Calu3 (cell line): ENCODE measurements at regions of chrX and their contacts with region 1.

Region 1: GRCh38 chrX:118807151-118808017 is 16.2 kb upstream of the ZCCHC12 start:
- DNase-seq: peak; percentile 51
- H3K4me3 Mint-ChIP-seq: no peak overlapping the region
- H3K27ac Mint-ChIP-seq: no peak overlapping the region
- H3K4me1 Mint-ChIP-seq: no peaks in the 10 kb centered on the region
- H3K27me3 Mint-ChIP-seq: no peaks in the 10 kb centered on the region
- CTCF ChIP-seq: peak; percentile 56

Region 2: GRCh38 chrX:118459494-118459893 is 347.9 kb before region 1 on chrX:
- CTCF ChIA-PET with region 1: no interaction called
- intact Hi-C with region 1: loop called (anchors 10 kb)
- DNase-seq: peak; percentile 32
- H3K4me3 Mint-ChIP-seq: no peak overlapping the region
- H3K27ac Mint-ChIP-seq: no peak overlapping the region
- H3K4me1 Mint-ChIP-seq: no peaks in the 10 kb centered on the region
- H3K27me3 Mint-ChIP-seq: no peaks in the 10 kb centered on the region
- CTCF ChIP-seq: peak; percentile 30

Region 3: DNA sequence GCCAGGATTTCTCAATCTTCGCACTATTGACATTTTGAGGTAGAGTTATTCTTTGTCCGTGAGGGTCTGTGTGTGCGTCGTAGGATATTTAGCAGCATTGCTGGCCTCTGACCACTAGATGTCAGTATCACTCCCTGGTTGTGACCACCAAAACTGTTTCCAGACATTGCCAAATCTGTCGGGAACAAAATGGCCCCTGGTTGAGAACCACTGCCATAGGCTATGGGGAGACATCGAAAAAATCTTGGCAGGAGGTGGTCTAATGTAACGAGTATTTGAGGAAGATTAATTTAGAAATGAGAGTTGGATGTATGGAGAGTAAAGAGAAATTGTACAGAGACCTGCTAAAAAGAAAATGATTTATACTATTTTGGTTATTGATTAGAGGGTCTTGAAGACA is 203.4 kb before region 1 on chrX:
- CTCF ChIA-PET with region 1: no interaction called
- intact Hi-C with region 1: loop called (anchors 1 kb)
- DNase-seq: peak; percentile 50
- H3K4me3 Mint-ChIP-seq: peak overlapping the region; percentile 28
- H3K27ac Mint-ChIP-seq: peak overlapping the region; percentile 27
- H3K4me1 Mint-ChIP-seq: peaks cover 8% of the 10 kb centered on the region
- H3K27me3 Mint-ChIP-seq: no peaks in the 10 kb centered on the region
- CTCF ChIP-seq: peak; percentile 37

Region 4: GRCh38 chrX:118637997-118638396 is 169.4 kb before region 1 on chrX:
- CTCF ChIA-PET with region 1: no interaction called
- intact Hi-C with region 1: loop called (anchors 1 kb)
- DNase-seq: no peak
- H3K4me3 Mint-ChIP-seq: no peak overlapping the region
- H3K27ac Mint-ChIP-seq: no peak overlapping the region
- H3K4me1 Mint-ChIP-seq: no peaks in the 10 kb centered on the region
- H3K27me3 Mint-ChIP-seq: no peaks in the 10 kb centered on the region
- CTCF ChIP-seq: no peak

Region 5: DNA sequence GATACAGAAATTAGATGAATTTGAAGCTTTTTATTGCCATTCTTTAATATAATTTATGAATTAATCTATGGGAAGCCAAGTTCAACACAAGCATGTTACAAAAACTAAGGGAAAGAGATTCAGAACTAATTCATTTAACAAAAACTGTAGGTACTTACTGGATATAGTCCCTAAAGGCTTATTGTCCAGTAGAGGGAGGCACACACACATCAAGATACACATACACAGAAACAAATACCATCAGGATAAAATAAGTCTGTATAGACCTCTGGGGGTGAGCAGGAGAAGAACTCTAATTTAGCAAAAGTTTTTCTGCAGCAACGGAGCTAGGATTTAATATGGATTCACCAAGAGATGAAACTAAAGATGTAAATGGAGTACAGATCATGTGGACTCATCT is 163.0 kb before region 1 on chrX:
- CTCF ChIA-PET with region 1: interaction called, 11 read pairs
- intact Hi-C with region 1: loop called (anchors 1 kb)
- DNase-seq: peak; percentile 15
- H3K4me3 Mint-ChIP-seq: no peak overlapping the region
- H3K27ac Mint-ChIP-seq: no peak overlapping the region
- H3K4me1 Mint-ChIP-seq: peaks cover 7% of the 10 kb centered on the region
- H3K27me3 Mint-ChIP-seq: no peaks in the 10 kb centered on the region
- CTCF ChIP-seq: no peak

Region 6: DNA sequence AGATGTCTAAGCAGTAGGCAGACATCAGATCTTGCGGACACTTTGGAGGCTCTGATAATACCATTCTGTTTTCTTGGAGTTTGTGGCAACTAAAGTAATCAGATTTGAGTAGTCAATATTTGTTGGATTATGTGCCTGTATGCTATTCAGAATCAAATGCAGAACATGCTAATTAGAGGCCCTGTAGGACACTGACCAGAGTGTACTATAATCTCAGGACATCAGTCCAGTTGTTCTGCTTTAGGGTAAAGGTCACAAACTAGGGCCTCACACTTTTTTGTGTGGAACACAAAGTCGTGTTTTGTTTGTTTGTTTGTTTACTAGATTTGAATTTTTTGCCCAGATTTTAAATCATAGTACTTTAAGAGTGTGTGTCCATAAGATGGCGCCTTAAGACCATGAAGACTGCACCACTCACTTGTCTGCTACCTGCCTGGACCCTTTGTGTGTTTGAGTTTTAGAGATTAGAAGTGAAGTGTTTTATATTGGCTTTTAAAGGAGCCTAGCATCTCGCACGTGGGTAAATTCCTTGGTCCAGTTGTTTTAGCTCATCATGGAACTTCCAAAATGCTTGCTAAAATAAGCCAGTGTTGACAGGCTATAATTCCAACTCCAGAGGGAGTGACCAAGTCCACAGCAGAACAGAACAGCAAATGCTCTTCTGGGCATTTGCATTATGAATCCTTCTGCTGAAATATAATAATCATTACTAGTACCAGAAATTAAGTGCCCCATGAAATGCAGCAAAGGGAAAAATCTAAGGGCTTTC is 45.3 kb before region 1 on chrX:
- CTCF ChIA-PET with region 1: no interaction called
- intact Hi-C with region 1: loop called (anchors 5 kb)
- DNase-seq: no peak
- H3K4me3 Mint-ChIP-seq: no peak overlapping the region
- H3K27ac Mint-ChIP-seq: no peak overlapping the region
- H3K4me1 Mint-ChIP-seq: no peaks in the 10 kb centered on the region
- H3K27me3 Mint-ChIP-seq: no peaks in the 10 kb centered on the region
- CTCF ChIP-seq: no peak

Region 7: DNA sequence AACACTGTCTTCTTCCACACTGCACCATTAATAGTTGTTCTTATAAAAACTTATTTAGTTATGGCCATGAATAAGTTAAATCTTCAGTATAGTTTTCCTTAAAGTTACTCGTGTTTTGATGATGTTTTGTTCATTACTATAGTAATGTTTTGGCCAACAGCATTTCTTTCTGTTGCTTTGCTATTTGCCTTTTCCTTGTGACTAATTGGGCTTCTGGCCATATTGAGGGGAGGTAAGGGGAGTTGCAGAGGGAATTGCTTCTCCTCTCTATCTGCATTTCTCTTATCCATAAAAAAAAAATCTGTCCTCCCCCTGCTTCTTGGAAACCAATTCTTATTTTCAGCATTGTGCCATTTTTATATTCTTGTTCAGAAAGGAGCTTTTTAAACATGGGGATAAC is 26.5 kb before region 1 on chrX:
- CTCF ChIA-PET with region 1: no interaction called
- intact Hi-C with region 1: no loop called
- DNase-seq: no peak
- H3K4me3 Mint-ChIP-seq: no peak overlapping the region
- H3K27ac Mint-ChIP-seq: no peak overlapping the region
- H3K4me1 Mint-ChIP-seq: no peaks in the 10 kb centered on the region
- H3K27me3 Mint-ChIP-seq: no peaks in the 10 kb centered on the region
- CTCF ChIP-seq: no peak

Region 8: DNA sequence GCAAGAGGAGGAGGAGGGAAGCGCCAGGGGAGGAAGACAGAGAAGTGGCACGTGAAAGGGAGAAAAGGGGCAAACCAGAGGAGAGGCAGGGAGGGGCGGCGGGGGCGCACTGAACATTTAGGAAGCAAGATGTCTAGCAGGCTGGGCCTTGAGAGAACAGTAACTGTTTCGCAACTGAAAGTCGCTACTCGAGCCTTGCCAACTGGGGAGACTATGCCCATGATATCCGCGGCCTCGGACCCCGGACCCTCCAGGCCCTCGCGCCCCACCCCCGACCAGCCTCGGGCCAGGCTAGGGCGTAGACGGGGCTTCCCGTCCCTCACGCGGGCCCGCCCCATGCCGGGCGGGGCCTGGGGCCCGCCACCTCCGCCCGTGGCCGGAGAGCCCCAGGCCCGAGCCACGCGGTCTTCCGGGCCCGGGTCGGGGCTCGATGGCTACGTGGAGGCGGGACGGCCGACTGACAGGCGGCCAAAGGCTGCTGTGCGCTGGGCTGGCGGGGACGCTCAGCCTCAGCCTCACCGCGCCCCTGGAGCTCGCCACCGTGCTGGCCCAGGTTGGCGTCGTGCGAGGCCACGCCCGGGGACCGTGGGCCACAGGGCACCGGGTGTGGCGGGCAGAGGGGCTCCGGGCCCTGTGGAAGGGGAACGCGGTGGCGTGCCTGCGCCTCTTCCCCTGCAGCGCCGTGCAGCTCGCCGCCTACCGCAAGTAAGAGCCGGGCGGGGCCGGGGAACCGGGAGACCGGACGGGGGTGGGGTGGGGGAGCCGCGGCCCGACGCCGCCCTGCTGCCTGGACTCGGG is 591.8 kb after region 1 on chrX and contains the start of gene SLC25A43:
- CTCF ChIA-PET with region 1: no interaction called
- intact Hi-C with region 1: no loop called
- DNase-seq: peak; percentile 33
- H3K4me3 Mint-ChIP-seq: peak within 1 kb of the TSS; percentile 78
- H3K27ac Mint-ChIP-seq: peak within 1 kb of the TSS; percentile 89
- H3K4me1 Mint-ChIP-seq: peaks cover 12% of the 10 kb centered on the region
- H3K27me3 Mint-ChIP-seq: no peaks in the 10 kb centered on the region
- CTCF ChIP-seq: no peak
- total RNA-seq, gene SLC25A43: 14.3 and 15.5 TPM in 2 replicates